ENCODE measurements at regions of chr14 and their contacts with region 1.

Region 1: GRCh38 chr14:20365928-20366327 is 22.5 kb downstream of the PARP2 start:
- DNase-seq: no peak
- H3K4me3 Mint-ChIP-seq: no peak overlapping the region
- H3K27ac Mint-ChIP-seq: no peak overlapping the region
- H3K4me1 Mint-ChIP-seq: peaks cover 5% of the 10 kb centered on the region
- H3K27me3 Mint-ChIP-seq: no peaks in the 10 kb centered on the region

Region 2: GRCh38 chr14:20332788-20333493 is 33.0 kb before region 1 on chr14 and contains the start of gene CCNB1IP1:
- intact Hi-C with region 1: loop called (anchors 2 kb)
- DNase-seq: peak; percentile 89
- H3K4me3 Mint-ChIP-seq: peak within 1 kb of the TSS; percentile 99
- H3K27ac Mint-ChIP-seq: peak within 1 kb of the TSS; percentile 94
- H3K4me1 Mint-ChIP-seq: peaks cover 38% of the 10 kb centered on the region
- H3K27me3 Mint-ChIP-seq: peaks cover 5% of the 10 kb centered on the region
- total RNA-seq, gene CCNB1IP1: 60.5 and 61.8 TPM in 2 replicates

Region 3: DNA sequence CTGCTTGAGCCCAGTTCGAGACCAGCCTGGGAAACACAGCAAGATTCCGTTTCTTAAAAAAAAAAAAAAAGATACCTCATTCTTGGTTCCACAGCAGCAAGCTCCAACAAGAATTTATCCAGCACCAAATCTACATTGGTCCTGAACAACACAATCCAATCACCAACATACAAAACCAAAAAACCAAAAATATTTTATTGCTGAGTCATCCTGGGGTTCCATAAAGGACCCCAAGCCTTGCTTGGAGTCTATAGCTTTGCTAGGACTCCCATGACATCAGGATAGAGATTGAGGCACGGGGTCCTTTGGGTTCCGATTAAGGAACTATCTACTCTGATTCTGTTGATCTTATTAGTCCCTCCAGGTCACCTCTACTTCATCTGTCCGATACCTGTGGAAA is 81.0 kb after region 1 on chr14:
- intact Hi-C with region 1: no loop called
- DNase-seq: no peak
- H3K4me3 Mint-ChIP-seq: no peak overlapping the region
- H3K27ac Mint-ChIP-seq: no peak overlapping the region
- H3K4me1 Mint-ChIP-seq: peaks cover 6% of the 10 kb centered on the region
- H3K27me3 Mint-ChIP-seq: no peaks in the 10 kb centered on the region

Measured in activated CD4-positive, alpha-beta T cell treated with anti-CD3 and anti-CD28 coated beads, Interleukin-2, amount 10 ng/mL, durations not matched to agents 24 days and 14 days (primary cell).